ENCODE measurements at regions of chr17 and their contacts with region 1.

Region 1: GRCh38 chr17:7834962-7835813 is 1.2 kb downstream of the KDM6B start:
- DNase-seq: peak; percentile 95
- H3K4me3 Mint-ChIP-seq: peak overlapping the region; percentile 90
- H3K27ac Mint-ChIP-seq: peak overlapping the region; percentile 95
- H3K4me1 Mint-ChIP-seq: peaks cover 43% of the 10 kb centered on the region
- H3K27me3 Mint-ChIP-seq: no peaks in the 10 kb centered on the region

Region 2: DNA sequence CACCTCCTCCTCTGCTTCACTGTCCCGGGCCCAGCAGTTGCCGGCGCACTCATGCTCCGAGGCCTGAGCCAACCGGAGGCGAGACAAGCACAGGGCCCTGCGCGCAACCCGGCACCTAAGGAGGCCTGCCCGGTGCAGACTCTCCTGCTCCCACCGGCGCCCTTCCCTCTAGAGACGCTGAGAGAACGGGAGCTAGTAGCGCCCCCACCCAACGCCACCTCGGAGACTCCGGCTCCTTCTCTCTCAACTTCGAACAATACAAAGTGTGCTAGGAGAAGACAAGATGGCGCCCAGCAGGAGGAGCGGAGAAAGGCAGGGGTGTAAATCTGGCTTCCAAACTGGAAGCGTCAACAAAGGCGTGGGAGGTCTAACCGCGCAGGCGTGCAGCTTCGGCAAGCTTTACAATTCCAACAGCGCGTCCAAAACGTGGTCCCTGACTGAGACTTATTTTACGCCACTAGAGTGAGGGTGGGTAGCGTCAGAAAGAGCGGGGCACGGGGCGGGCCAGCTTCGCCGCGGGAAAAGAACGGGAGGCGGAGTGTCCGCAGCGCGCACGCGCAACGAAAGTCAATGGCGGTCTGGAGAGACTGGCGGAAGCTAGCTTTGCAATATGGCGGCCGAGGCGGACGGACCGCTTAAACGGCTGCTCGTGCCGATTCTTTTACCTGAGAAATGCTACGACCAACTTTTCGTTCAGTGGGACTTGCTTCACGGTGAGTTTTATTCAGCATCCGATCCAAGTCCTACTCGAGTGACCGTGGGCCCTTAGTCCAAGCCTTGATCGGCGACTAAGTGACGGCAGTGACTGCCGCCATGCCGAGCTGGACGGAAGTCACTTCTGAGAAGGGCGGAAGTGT is 251.7 kb before region 1 on chr17 and contains the start of gene MPDU1:
- CTCF ChIA-PET with region 1: no interaction called
- POLR2A ChIA-PET with region 1: interaction called, 5 read pairs
- intact Hi-C with region 1: loop called (anchors 5 kb)
- DNase-seq: peak; percentile 98
- H3K4me3 Mint-ChIP-seq: peak within 1 kb of the TSS; percentile 95
- H3K27ac Mint-ChIP-seq: peak within 1 kb of the TSS; percentile 100
- H3K4me1 Mint-ChIP-seq: peaks cover 57% of the 10 kb centered on the region
- H3K27me3 Mint-ChIP-seq: no peaks in the 10 kb centered on the region
- total RNA-seq, gene MPDU1: 52.6 to 52.9 TPM

Region 3: GRCh38 chr17:7851438-7852256 is 16.5 kb after region 1 on chr17:
- CTCF ChIA-PET with region 1: interaction called, 70 read pairs
- POLR2A ChIA-PET with region 1: interaction called, 18 read pairs
- intact Hi-C with region 1: loop called (anchors 1 kb)
- DNase-seq: peak; percentile 95
- H3K4me3 Mint-ChIP-seq: peak overlapping the region; percentile 66
- H3K27ac Mint-ChIP-seq: peak overlapping the region; percentile 49
- H3K4me1 Mint-ChIP-seq: peaks cover 56% of the 10 kb centered on the region
- H3K27me3 Mint-ChIP-seq: no peaks in the 10 kb centered on the region

Region 4: DNA sequence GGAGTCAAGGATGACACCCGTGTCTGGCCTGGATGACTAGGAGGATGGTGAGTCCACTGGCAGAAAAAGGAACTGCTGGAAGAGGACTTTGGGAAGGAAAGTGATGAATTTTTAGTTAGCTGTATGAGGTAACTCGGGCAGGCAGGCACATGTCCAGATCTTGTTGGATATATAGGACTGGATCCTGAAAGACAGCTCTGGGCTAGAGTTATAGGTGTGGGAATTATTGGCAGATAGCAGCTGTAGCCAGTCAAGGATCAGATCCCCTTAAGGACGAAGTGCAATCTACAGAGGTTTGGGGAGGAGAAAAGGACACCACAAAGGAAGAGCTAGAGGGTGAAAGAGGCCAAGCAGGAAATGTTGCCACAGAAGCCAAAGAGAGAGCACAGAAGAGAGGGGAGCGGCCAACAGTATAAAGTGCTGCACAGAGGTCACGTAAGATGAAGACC is 32.7 kb after region 1 on chr17:
- CTCF ChIA-PET with region 1: interaction called, 10 read pairs
- POLR2A ChIA-PET with region 1: no interaction called
- intact Hi-C with region 1: no loop called
- DNase-seq: no peak
- H3K4me3 Mint-ChIP-seq: no peak overlapping the region
- H3K27ac Mint-ChIP-seq: peak overlapping the region; percentile 60
- H3K4me1 Mint-ChIP-seq: peaks cover 25% of the 10 kb centered on the region
- H3K27me3 Mint-ChIP-seq: no peaks in the 10 kb centered on the region